Sigmoid colon (tissue), 7 donors: ENCODE measurements at regions of chr9 and their contacts with region 1.

Region 1: DNA sequence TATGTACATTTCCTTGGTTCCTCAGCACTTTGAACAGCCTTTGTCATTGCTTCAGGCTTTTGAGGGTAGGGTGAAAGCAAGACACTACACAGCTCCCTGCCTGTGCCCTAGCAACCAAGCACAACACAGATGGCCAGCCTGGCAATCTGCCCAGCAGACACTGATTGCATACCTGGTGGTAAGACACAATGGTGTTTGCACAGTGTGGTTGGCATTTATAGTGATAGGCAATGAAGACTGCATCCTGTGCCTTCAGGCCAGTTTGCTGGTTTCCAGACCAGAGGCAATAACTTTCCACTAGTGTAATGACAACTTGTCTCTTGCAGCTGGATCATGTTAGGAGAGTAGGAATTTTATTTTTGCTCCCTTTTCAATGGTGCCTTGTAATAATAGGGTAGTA is 144.5 kb upstream of the TNC start:
- DNase-seq: peak; percentile 95
- H3K4me3 ChIP-seq: no peak overlapping the region
- H3K27ac ChIP-seq: peak overlapping the region in 3 of 4 donors; percentile 65 to 74 (median 72)
- H3K4me1 ChIP-seq: peaks cover 0 to 42% (median 30%) of the 10 kb centered on the region in 4 donors
- H3K27me3 ChIP-seq: no peaks in the 10 kb centered on the region
- CTCF ChIP-seq: no peak
- EP300 ChIP-seq: peak; percentile 75 to 95 (median 88)
- POLR2A ChIP-seq: no peak

Region 2: DNA sequence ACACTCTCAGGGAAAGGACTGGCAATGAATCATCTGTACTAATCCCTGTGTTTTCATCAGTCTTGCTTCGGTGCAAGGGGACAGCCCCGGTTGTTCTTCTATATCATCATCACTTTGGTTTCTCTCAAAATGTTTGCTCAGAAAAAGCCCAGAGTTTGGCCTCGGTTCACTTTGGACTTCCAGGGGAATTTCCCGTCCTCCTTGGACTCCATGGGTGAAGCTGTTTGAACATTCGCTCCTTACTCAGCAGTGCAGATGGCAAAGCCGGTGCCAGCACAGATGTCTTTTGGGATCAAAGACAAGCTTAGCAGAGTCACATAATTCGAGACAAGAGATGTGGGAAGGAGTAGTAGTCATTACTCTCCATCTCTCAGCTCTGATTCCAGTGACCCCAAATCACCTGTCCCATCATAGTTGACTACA is 262.2 kb before region 1 on chr9:
- intact Hi-C with region 1: no loop called
- DNase-seq: no peak
- H3K4me3 ChIP-seq: no peak overlapping the region
- H3K27ac ChIP-seq: no peak overlapping the region
- H3K4me1 ChIP-seq: peaks cover 0 to 8% (median 0%) of the 10 kb centered on the region in 4 donors
- H3K27me3 ChIP-seq: no peaks in the 10 kb centered on the region
- CTCF ChIP-seq: no peak
- EP300 ChIP-seq: no peak
- POLR2A ChIP-seq: no peak

Region 3: DNA sequence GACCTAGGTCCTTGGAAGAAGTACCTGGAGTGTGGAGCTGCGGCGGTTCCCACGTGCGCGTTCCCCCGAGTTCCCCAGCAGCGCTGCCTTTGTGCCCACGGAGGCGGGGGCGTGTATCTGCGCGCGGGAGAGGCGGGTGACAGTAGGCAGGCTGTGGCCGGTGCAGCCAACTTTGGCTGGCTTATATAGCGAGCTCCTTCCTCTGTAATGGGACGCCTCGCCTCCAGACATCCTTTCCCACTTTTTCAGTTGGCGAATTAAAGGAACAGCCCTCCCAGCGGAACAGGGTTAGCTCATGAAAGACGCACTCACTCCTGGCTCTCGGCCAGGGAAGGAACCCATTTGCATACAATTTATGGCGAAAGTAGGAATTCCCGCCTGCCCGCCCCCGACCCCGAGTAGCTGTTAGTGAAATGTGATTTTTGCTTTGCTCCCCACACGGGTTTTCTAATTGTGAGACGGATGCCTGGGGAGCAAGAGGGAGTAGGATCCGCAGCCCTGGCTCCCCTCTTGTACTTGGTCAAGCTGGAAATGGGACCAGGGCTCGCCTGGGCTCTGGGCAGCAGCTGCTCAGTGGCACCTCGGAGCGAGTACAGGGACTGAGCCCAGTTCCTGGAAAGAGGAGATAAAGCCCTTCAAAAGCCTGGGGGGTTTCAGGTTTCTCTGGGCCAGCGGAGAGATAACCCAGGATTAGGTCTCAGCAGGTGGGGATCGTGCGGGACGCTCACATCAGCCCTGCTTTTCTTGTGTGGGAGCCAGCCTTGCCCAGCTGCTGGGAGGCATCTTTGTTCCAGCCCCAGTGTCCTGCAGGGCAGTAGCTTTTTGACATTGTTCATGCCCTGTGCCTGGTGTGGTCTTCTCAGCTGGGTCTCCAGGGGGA is 144.2 kb before region 1 on chr9 and contains the start of gene TNC:
- intact Hi-C with region 1: loop called (anchors 10 kb)
- DNase-seq: peak; percentile 94
- H3K4me3 ChIP-seq: peak within 1 kb of the TSS; percentile 28 to 61 (median 56)
- H3K27ac ChIP-seq: peak within 1 kb of the TSS; percentile 88 to 97 (median 96)
- H3K4me1 ChIP-seq: peaks cover 0 to 49% (median 42%) of the 10 kb centered on the region in 4 donors
- H3K27me3 ChIP-seq: no peaks in the 10 kb centered on the region
- CTCF ChIP-seq: no peak
- EP300 ChIP-seq: peak in 2 of 4 donors; percentile 63 to 85
- POLR2A ChIP-seq: peak; percentile 63 to 93
- total RNA-seq, gene TNC: 127 to 742 (median 590) TPM

Region 4: GRCh38 chr9:115157245-115157674 is 105.2 kb before region 1 on chr9:
- intact Hi-C with region 1: loop called (anchors 10 kb)
- DNase-seq: peak; percentile 66
- H3K4me3 ChIP-seq: no peak overlapping the region
- H3K27ac ChIP-seq: peak overlapping the region; percentile 69 to 85 (median 78)
- H3K4me1 ChIP-seq: peaks cover 0 to 54% (median 46%) of the 10 kb centered on the region in 4 donors
- H3K27me3 ChIP-seq: no peaks in the 10 kb centered on the region
- CTCF ChIP-seq: no peak
- EP300 ChIP-seq: peak in 2 of 4 donors; percentile 28 to 40
- POLR2A ChIP-seq: no peak

Region 5: DNA sequence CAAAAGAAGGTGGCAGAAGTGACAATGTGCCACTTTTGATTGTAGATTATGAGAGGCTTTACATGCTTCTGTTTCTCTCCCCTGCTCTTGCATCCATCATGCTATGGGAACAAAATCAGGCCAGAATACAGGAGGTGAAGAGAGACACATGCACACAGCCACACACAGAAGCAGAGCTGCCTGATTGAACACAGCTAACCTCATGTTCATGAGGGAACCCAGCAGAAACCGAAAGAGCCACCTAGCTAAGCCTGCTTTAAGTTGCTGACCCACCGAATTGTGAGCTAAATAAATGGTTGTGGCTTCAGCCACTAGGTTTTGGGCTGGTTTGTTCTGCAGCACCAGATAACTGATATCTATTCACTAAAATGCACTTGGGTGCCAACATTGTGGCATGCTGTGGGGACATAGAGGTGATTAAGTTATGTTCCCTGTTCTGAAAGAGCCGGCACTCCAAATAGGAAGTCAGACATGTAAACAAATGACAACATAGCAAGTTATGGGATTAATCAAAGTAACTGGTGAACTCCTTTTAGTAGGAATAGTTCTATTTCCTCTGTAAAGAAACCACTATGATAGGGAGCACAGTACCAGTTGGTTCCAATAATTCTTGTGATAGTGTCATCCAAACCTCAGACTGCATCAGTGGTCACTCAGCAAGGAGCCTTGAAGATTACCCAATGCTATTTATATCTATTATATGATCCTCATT is 50.9 kb before region 1 on chr9:
- intact Hi-C with region 1: loop called (anchors 5 kb)
- DNase-seq: no peak
- H3K4me3 ChIP-seq: no peak overlapping the region
- H3K27ac ChIP-seq: peak overlapping the region in 3 of 4 donors; percentile 37 to 77 (median 44)
- H3K4me1 ChIP-seq: peaks cover 0 to 44% (median 32%) of the 10 kb centered on the region in 4 donors
- H3K27me3 ChIP-seq: no peaks in the 10 kb centered on the region
- CTCF ChIP-seq: no peak
- EP300 ChIP-seq: no peak
- POLR2A ChIP-seq: no peak

Region 6: GRCh38 chr9:115466756-115467155 is 204.3 kb after region 1 on chr9:
- intact Hi-C with region 1: no loop called
- DNase-seq: peak; percentile 67
- H3K4me3 ChIP-seq: no peak overlapping the region
- H3K27ac ChIP-seq: no peak overlapping the region
- H3K4me1 ChIP-seq: no peaks in the 10 kb centered on the region
- H3K27me3 ChIP-seq: no peaks in the 10 kb centered on the region
- CTCF ChIP-seq: no peak
- EP300 ChIP-seq: no peak
- POLR2A ChIP-seq: no peak

Region 7: GRCh38 chr9:115495052-115495635 is 232.7 kb after region 1 on chr9:
- intact Hi-C with region 1: loop called (anchors 10 kb)
- DNase-seq: no peak
- H3K4me3 ChIP-seq: no peak overlapping the region
- H3K27ac ChIP-seq: no peak overlapping the region
- H3K4me1 ChIP-seq: peaks cover 0 to 13% (median 6%) of the 10 kb centered on the region in 4 donors
- H3K27me3 ChIP-seq: no peaks in the 10 kb centered on the region
- CTCF ChIP-seq: no peak
- EP300 ChIP-seq: no peak
- POLR2A ChIP-seq: no peak